Activated T-helper 1 cell treated with anti-CD3 and anti-CD28 coated beads, Interleukin-12 subunit alpha, Interleukin-12 subunit beta, Interleukin-2, Interleukin-4 antibody, amounts not matched to agents 30 ng/mL and 10 ng/mL and 1 ng/mL, durations not matched to agents 14 hours and 24 hours and 36 hours (primary cell): ENCODE measurements at regions of chr18 and their contacts with region 1.

Region 1: GRCh38 chr18:35949903-35950627 is 22.4 kb upstream of the RMP24 start:
- DNase-seq: peak; percentile 42
- H3K4me3 Mint-ChIP-seq: peak overlapping the region; percentile 83
- H3K27ac Mint-ChIP-seq: no peak overlapping the region
- H3K4me1 Mint-ChIP-seq: peaks cover 11% of the 10 kb centered on the region
- H3K27me3 Mint-ChIP-seq: peaks cover 14% of the 10 kb centered on the region

Region 2: GRCh38 chr18:35386600-35387351 is 563.3 kb before region 1 on chr18:
- intact Hi-C with region 1: loop called (anchors 1 kb)
- DNase-seq: peak; percentile 56
- H3K4me3 Mint-ChIP-seq: no peak overlapping the region
- H3K27ac Mint-ChIP-seq: no peak overlapping the region
- H3K4me1 Mint-ChIP-seq: peaks cover 9% of the 10 kb centered on the region
- H3K27me3 Mint-ChIP-seq: peaks cover 21% of the 10 kb centered on the region

Region 3: DNA sequence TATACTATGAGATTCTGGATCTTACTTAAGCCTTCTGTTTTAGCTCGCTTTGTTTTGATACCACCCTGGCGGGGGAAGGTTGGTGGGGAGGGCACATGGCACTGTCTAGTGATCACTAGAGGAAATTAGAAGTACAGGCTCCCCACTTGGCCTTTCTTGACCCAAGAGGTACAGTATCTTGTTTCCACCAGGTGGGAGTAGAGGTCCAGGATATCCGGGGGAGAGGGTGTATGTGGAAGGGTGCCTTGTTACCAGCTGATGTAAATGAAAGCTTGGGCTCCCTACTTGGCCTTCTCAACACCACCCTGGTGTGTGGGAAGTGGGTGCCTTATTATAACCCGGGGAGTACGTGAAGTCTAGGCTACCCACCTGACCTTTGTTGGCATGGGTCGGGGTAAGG is 361.1 kb before region 1 on chr18:
- intact Hi-C with region 1: loop called (anchors 5 kb)
- DNase-seq: no peak
- H3K4me3 Mint-ChIP-seq: no peak overlapping the region
- H3K27ac Mint-ChIP-seq: no peak overlapping the region
- H3K4me1 Mint-ChIP-seq: peaks cover 28% of the 10 kb centered on the region
- H3K27me3 Mint-ChIP-seq: no peaks in the 10 kb centered on the region